HEK293 (cell line): ENCODE measurements at regions of chr17 and their contacts with region 1.

Region 1: GRCh38 chr17:48577946-48578615 is at the start of gene HOXB4:
- H3K4me3 ChIP-seq: peak within 1 kb of the TSS; percentile 52
- H3K27ac ChIP-seq: peak within 1 kb of the TSS; percentile 93
- H3K4me1 ChIP-seq: peaks cover 68% of the 10 kb centered on the region
- CTCF ChIP-seq: no peak

Region 2: GRCh38 chr17:47106130-47106529 is 1472.0 kb before region 1 on chr17:
- CTCF ChIA-PET with region 1: no interaction called
- POLR2A ChIA-PET with region 1: no interaction called
- H3K4me3 ChIP-seq: no peak overlapping the region
- H3K27ac ChIP-seq: no peak overlapping the region
- H3K4me1 ChIP-seq: no peaks in the 10 kb centered on the region
- CTCF ChIP-seq: no peak

Region 3: GRCh38 chr17:48555258-48556228 is 22.5 kb before region 1 on chr17:
- CTCF ChIA-PET with region 1: interaction called, 5 read pairs
- POLR2A ChIA-PET with region 1: interaction called, 26 read pairs
- H3K4me3 ChIP-seq: peak overlapping the region; percentile 44
- H3K27ac ChIP-seq: peak overlapping the region; percentile 97
- H3K4me1 ChIP-seq: peaks cover 58% of the 10 kb centered on the region
- CTCF ChIP-seq: no peak